ENCODE measurements at regions of chr12 and their contacts with region 1.

Region 1: DNA sequence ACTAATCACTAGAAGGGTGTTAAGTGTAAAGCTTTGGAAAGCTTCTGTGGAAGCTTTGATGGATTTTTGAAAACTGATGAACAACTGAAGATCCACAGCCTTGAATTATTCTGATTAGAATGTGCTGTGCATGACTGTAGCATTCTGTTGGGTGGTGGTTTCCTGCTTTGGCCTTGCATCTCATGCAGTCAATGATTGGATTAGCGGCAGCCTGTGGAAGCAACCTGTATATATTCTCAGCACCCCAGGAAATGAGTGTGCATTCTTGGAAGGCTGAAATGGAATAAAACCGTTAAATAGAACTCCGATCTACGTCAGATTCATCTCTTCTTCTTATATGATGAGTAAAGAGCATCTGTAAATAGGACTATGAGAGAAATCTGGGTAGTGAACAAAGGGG is 120.2 kb downstream of the SLC16A7 start:
- DNase-seq: no peak
- ATAC-seq: peak in 3 of 4 donors; percentile 36 to 70 (median 50)
- H3K4me3 ChIP-seq: no peak overlapping the region
- H3K27ac ChIP-seq: peak overlapping the region in 1 of 4 donors; percentile 49
- H3K4me1 ChIP-seq: peaks cover 14 to 33% (median 28%) of the 10 kb centered on the region in 3 donors
- H3K27me3 ChIP-seq: no peaks in the 10 kb centered on the region
- CTCF ChIP-seq: no peak

Region 2: DNA sequence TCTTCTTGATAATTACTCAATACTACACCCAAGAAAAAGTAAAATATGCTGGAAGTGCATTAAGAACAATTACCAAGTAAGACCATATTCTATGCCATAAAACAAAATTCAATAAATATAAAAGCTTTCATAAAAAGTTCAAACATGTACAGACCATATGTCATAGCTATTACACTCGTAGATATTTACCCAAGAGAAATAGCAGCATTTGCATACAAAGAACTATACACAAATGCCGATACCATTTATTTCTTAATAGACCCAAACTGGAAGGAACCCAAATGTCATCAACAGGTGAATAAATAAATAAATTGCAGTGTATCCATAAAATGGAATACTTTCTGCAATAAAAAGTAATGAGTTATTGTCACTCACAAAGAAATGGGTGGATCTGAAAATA is 198.5 kb before region 1 on chr12:
- intact Hi-C with region 1: no loop called
- DNase-seq: no peak
- ATAC-seq: no peak
- H3K4me3 ChIP-seq: no peak overlapping the region
- H3K27ac ChIP-seq: no peak overlapping the region
- H3K4me1 ChIP-seq: no peaks in the 10 kb centered on the region
- H3K27me3 ChIP-seq: no peaks in the 10 kb centered on the region
- CTCF ChIP-seq: no peak

Region 3: DNA sequence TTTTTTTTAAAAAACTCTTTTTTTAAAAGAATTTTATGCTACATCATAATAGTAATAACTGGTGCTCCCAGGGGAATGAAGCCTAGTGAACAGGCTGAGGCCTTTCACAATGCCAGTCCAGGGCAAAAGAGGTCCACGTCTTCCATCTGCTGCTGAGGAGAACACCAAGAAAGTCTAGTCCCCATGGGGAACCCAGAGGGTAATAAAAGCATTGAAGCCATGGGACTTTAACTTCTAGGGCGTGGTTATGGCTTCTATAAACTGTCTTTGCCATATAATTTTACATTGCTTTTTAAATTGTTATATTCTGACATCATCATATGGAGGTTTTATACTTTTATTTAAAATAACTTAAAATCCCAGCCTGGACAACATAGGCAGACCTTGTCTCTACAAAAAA is 55.9 kb before region 1 on chr12:
- intact Hi-C with region 1: loop called in 1 of 3 experiments (anchors 10 kb)
- DNase-seq: no peak
- ATAC-seq: no peak
- H3K4me3 ChIP-seq: no peak overlapping the region
- H3K27ac ChIP-seq: no peak overlapping the region
- H3K4me1 ChIP-seq: peaks cover 0 to 13% (median 4%) of the 10 kb centered on the region in 3 donors
- H3K27me3 ChIP-seq: no peaks in the 10 kb centered on the region
- CTCF ChIP-seq: no peak

Measured in pancreas (tissue), 10 donors.